ENCODE measurements at regions of chr19 and their contacts with region 1.

Region 1: GRCh38 chr19:40954573-40954972 is 36.5 kb upstream of the CYP2B6 start:
- DNase-seq: no peak
- H3K4me3 ChIP-seq: no peak overlapping the region
- H3K27ac ChIP-seq: no peak overlapping the region
- H3K4me1 ChIP-seq: no peaks in the 10 kb centered on the region
- H3K27me3 ChIP-seq: no peaks in the 10 kb centered on the region
- CTCF ChIP-seq: no peak
- POLR2A ChIP-seq: no peak

Region 2: DNA sequence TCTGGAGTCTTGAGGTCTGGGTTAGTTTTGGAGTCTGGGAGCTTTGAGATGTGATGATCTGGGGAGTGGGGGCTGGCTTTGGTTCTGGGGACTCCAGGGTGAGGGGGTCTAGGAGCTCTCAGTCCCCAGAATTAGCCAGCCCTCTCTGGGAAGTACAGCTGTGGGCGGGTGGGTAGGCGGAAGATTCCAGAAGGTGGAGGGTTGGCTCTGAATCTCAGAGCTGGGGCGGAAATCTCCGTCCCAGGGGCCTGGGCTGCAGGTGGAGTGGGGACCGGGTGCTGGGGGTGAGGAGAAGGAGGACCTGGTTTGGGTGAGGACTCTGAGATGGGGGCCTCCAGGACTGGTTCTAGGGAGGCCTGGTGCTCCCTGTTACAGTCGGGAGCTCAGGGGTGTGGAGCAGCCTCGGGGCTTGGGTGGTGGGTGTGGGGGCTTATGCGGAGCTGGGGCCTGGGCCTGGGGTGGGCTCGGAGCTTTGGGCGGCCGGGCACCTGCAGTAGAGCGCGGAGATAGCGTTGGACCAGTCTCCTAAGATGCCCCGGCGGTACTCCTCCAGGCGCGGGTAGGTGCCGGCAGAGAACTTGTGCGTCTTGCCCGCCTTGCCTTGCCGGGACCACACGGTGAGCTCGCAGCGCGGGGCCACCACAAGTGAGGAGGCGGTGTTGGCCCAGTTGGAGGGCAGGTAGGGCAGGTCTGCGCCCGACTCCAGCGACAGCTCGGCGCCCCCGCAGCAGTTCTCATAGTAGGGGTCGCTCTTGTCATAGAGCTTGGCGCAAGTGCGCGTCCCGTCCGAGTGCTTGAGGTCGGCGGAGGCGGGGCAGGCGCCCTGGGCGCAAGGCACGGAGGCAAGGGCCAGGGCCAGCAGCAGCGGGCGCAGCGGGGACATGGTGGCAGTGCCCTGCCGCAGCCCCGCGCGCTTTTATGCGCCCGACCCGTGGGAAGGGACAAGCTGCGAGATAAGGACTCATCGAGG is 1750.9 kb before region 1 on chr19 and contains the start of gene SYCN:
- intact Hi-C with region 1: loop called (anchors 10 kb)
- DNase-seq: no peak
- H3K4me3 ChIP-seq: no peak within 1 kb of the TSS
- H3K27ac ChIP-seq: no peak within 1 kb of the TSS
- H3K4me1 ChIP-seq: no peaks in the 10 kb centered on the region
- H3K27me3 ChIP-seq: peaks cover 7% of the 10 kb centered on the region
- CTCF ChIP-seq: no peak
- POLR2A ChIP-seq: no peak
- total RNA-seq, gene SYCN: not detected

Region 3: GRCh38 chr19:41363753-41364523 is 409.4 kb after region 1 on chr19 and contains the start of gene B9D2:
- intact Hi-C with region 1: no loop called
- DNase-seq: peak in 1 of 2 donors; percentile 98
- H3K4me3 ChIP-seq: peak within 1 kb of the TSS; percentile 60 to 86
- H3K27ac ChIP-seq: peak within 1 kb of the TSS; percentile 97
- H3K4me1 ChIP-seq: peaks cover 23% of the 10 kb centered on the region
- H3K27me3 ChIP-seq: no peaks in the 10 kb centered on the region
- CTCF ChIP-seq: peak in 1 of 3 experiments; percentile 2
- POLR2A ChIP-seq: peak in 1 of 2 donors; percentile 33
- total RNA-seq, gene B9D2: not detected

Measured in vagina (tissue), 2 donors.